ENCODE measurements at regions of chr1 and their contacts with region 1.

Region 1: GRCh38 chr1:236759252-236759859 is 35.7 kb upstream of the MTR start:
- DNase-seq: peak; percentile 81
- H3K4me3 Mint-ChIP-seq: no peak overlapping the region
- H3K27ac Mint-ChIP-seq: no peak overlapping the region
- H3K4me1 Mint-ChIP-seq: no peaks in the 10 kb centered on the region
- H3K27me3 Mint-ChIP-seq: no peaks in the 10 kb centered on the region
- CTCF ChIP-seq: peak; percentile 90

Region 2: DNA sequence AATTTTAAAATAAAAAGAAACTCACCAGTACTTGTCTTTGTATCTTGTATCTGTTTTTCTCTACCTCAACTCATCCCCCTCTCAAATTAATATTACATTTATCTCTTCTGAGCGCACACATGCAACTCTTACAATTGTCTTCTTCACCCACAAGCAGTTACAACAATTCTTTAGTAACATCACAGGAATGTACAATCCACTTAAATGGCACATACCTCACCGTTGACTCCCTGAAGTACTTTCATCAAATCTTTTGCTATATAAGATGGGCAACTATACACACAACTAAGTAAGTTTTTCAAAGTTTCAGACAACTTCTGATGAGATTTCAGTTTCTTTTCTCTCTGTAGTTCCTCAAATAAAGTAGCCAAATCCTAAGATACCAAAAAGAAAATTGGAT is 183.4 kb before region 1 on chr1:
- CTCF ChIA-PET with region 1: no interaction called
- POLR2A ChIA-PET with region 1: no interaction called
- intact Hi-C with region 1: no loop called
- DNase-seq: no peak
- H3K4me3 Mint-ChIP-seq: no peak overlapping the region
- H3K27ac Mint-ChIP-seq: peak overlapping the region; percentile 0
- H3K4me1 Mint-ChIP-seq: no peaks in the 10 kb centered on the region
- H3K27me3 Mint-ChIP-seq: no peaks in the 10 kb centered on the region
- CTCF ChIP-seq: no peak

Region 3: GRCh38 chr1:236702791-236703394 is 56.5 kb before region 1 on chr1:
- CTCF ChIA-PET with region 1: interaction called, 12 read pairs
- POLR2A ChIA-PET with region 1: no interaction called
- intact Hi-C with region 1: no loop called
- DNase-seq: no peak
- H3K4me3 Mint-ChIP-seq: no peak overlapping the region
- H3K27ac Mint-ChIP-seq: no peak overlapping the region
- H3K4me1 Mint-ChIP-seq: no peaks in the 10 kb centered on the region
- H3K27me3 Mint-ChIP-seq: no peaks in the 10 kb centered on the region
- CTCF ChIP-seq: no peak

Region 4: GRCh38 chr1:236748471-236748870 is 10.9 kb before region 1 on chr1:
- CTCF ChIA-PET with region 1: interaction called, 53 read pairs
- POLR2A ChIA-PET with region 1: interaction called, 3 read pairs
- intact Hi-C with region 1: no loop called
- DNase-seq: peak; percentile 35
- H3K4me3 Mint-ChIP-seq: no peak overlapping the region
- H3K27ac Mint-ChIP-seq: no peak overlapping the region
- H3K4me1 Mint-ChIP-seq: peaks cover 5% of the 10 kb centered on the region
- H3K27me3 Mint-ChIP-seq: peaks cover 49% of the 10 kb centered on the region
- CTCF ChIP-seq: peak; percentile 25

Region 5: DNA sequence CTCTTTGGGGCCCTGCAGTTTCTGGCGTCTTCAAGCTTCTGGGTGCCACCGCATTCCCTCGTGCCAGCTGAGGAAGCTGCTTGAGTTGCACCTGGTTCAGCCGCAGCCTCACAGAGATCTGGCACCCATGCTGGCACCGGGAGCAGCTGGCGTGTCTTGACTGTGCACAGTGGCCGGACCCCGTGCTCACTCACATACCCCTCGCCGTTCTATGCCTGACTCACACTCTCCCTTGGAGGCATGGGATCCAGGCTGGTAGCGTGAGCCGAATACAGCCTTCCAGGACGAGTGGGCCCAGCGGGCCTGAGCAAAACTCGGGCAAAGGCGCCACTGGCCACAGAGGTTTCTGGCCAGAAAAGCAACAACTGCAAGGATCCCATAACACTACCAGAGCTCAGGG is 27.1 kb after region 1 on chr1:
- CTCF ChIA-PET with region 1: interaction called, 22 read pairs
- POLR2A ChIA-PET with region 1: no interaction called
- intact Hi-C with region 1: no loop called
- DNase-seq: no peak
- H3K4me3 Mint-ChIP-seq: no peak overlapping the region
- H3K27ac Mint-ChIP-seq: no peak overlapping the region
- H3K4me1 Mint-ChIP-seq: no peaks in the 10 kb centered on the region
- H3K27me3 Mint-ChIP-seq: peaks cover 13% of the 10 kb centered on the region
- CTCF ChIP-seq: no peak

Region 6: DNA sequence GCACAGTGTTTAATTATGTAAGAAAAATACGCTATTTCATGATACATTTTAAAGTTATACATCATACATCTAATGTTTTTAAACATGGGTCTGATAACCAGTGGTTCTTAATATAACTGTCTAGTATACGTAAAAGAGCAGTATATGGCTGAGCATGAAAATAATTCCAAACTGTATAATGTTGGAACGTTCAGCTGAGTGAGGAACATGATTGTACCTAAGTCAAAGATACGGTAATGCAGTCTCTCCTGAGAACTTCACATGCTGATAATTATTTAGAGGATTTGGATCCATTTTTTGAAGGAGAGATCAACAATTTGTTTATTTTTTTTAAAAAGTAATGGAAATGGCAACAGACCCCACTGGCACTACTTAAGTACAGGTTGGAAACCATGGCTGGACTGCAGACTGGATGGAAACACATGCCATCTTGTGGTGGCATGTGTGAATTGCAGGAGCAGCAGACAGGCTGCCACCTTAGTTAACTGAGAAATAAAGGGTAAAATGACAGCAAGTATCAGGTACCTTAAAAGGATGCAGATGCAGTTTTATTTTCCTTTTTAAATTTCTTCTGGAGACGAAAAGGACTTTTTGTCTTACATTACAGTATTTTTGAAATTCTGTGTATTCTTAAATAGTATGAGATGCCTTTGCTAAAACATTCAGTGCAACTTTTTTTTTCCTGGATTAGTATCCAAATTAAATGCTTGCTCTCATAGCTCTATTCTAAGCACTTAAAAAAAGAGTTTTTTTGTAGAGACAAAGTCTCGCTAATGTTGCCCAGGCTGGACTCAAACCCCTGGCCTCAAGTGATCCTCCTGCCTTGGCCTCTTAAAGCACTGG is 109.5 kb after region 1 on chr1:
- CTCF ChIA-PET with region 1: interaction called, 28 read pairs
- POLR2A ChIA-PET with region 1: no interaction called
- intact Hi-C with region 1: loop called (anchors 1 kb)
- DNase-seq: peak; percentile 76
- H3K4me3 Mint-ChIP-seq: no peak overlapping the region
- H3K27ac Mint-ChIP-seq: no peak overlapping the region
- H3K4me1 Mint-ChIP-seq: peaks cover 5% of the 10 kb centered on the region
- H3K27me3 Mint-ChIP-seq: no peaks in the 10 kb centered on the region
- CTCF ChIP-seq: peak; percentile 99

Region 7: GRCh38 chr1:236978740-236979139 is 219.4 kb after region 1 on chr1:
- CTCF ChIA-PET with region 1: no interaction called
- POLR2A ChIA-PET with region 1: no interaction called
- intact Hi-C with region 1: no loop called
- DNase-seq: no peak
- H3K4me3 Mint-ChIP-seq: no peak overlapping the region
- H3K27ac Mint-ChIP-seq: no peak overlapping the region
- H3K4me1 Mint-ChIP-seq: no peaks in the 10 kb centered on the region
- H3K27me3 Mint-ChIP-seq: peaks cover 11% of the 10 kb centered on the region
- CTCF ChIP-seq: no peak

Region 8: GRCh38 chr1:237111807-237112206 is 352.5 kb after region 1 on chr1:
- CTCF ChIA-PET with region 1: no interaction called
- POLR2A ChIA-PET with region 1: no interaction called
- intact Hi-C with region 1: no loop called
- DNase-seq: no peak
- H3K4me3 Mint-ChIP-seq: no peak overlapping the region
- H3K27ac Mint-ChIP-seq: no peak overlapping the region
- H3K4me1 Mint-ChIP-seq: no peaks in the 10 kb centered on the region
- H3K27me3 Mint-ChIP-seq: peaks cover 12% of the 10 kb centered on the region
- CTCF ChIP-seq: no peak

Region 9: DNA sequence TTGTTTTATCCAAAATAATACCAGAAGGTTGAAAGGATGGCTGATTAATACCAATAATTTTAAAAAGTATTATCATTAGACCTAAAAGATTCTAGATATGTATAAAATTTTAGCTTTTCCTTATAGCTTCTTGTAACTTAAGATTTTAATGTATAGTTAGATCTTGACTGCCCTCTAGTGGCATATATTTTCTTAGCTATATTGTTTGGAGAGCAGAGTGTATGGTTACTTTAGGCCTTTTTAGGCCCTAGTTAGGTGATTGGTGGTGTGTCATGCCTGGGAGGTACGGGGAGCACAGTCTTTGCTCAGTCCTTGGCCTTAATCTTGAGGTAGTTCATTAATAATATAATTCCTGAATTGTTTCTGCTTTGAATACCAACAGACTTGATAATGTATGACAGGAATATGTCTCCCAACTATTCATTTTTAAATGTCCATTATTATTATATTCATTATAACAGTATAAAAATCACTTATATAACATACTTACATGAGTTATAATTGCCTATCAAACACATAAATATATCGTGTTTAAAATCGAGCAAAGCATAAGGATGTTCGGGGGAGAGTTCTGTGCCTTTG is 803.0 kb after region 1 on chr1:
- CTCF ChIA-PET with region 1: interaction called, 16 read pairs
- POLR2A ChIA-PET with region 1: no interaction called
- intact Hi-C with region 1: loop called (anchors 1 kb)
- DNase-seq: peak; percentile 89
- H3K4me3 Mint-ChIP-seq: no peak overlapping the region
- H3K27ac Mint-ChIP-seq: no peak overlapping the region
- H3K4me1 Mint-ChIP-seq: no peaks in the 10 kb centered on the region
- H3K27me3 Mint-ChIP-seq: no peaks in the 10 kb centered on the region
- CTCF ChIP-seq: peak; percentile 79